Adrenal gland (tissue), 19 donors: ENCODE measurements at regions of chr7 and their contacts with region 1.

Region 1: DNA sequence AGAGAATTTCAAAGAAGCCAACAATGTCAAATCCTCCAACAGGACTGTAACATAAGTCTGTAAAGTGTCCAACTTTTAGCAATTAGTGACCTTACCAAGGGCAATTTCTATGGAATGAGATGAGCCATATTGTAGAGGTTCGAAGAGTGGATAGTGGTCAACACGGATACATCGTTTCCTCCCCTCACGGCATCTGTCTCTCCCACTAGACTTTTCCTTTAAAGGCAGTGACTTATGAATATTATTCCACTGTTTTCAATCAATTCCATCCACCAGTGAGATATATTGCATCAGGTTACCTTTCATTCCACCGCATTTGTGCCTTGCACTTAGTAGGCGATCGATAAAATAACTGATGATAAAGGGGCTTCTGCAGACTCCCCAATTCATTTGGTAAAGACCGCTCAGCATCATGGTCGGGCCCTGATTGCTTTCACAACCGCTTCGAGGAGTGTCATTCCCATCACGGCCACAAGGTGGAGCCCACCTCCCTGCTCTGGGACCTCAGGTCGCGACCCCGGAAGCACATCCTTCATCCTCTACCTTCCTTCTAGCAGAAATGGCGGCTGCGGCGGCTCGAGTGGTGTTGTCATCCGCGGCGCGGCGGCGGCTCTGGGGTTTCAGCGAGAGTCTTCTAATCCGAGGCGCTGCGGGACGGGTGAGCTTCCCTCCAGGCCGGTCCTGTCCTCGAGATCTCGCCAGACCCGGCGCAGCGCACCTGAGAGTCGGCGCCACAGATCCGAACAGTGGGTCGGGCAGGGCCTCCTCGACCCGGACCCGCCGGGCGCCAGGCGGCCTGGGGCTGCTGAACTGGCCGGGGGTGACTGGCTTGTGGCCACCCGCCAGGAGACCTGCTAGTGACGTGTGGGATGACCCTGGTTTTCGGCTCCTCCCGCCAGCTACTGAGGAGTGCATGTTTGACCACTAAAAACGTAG is at the start of gene PMPCB:
- DNase-seq: peak; percentile 94 to 99 (median 97)
- H3K4me3 ChIP-seq: peak within 1 kb of the TSS; percentile 49 to 88 (median 70)
- H3K27ac ChIP-seq: peak within 1 kb of the TSS; percentile 67 to 95 (median 90)
- H3K4me1 ChIP-seq: peaks cover 12 to 21% of the 10 kb centered on the region in 2 donors
- H3K27me3 ChIP-seq: no peaks in the 10 kb centered on the region
- CTCF ChIP-seq: peak; percentile 90 to 98 (median 96)
- POLR2A ChIP-seq: peak; percentile 27 to 73
- total RNA-seq, gene PMPCB: 58.8 to 120 (median 80.6) TPM

Region 2: DNA sequence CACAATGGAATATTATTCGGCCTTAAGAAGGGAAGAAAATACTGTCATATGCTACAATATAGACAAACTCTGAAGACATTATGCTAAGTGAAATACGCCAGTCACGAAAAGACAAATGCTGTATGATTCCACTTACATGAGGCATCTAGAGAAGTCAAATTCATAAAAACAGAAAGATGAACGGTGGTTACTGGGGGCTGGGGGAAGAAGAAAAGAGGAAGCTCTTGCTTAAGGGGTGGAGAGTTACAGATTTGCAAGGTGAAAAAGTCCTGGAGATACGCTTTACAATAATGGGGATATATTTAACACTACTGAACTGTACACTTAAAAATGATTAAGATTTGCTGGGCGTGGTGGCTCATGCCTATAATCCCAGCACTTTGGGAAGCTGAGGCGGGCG is 99.3 kb after region 1 on chr7:
- intact Hi-C with region 1: loop called in 1 of 2 experiments (anchors 10 kb)
- DNase-seq: no peak
- H3K4me3 ChIP-seq: no peak overlapping the region
- H3K27ac ChIP-seq: no peak overlapping the region
- H3K4me1 ChIP-seq: no peaks in the 10 kb centered on the region
- H3K27me3 ChIP-seq: no peaks in the 10 kb centered on the region
- CTCF ChIP-seq: no peak
- POLR2A ChIP-seq: no peak

Region 3: GRCh38 chr7:103752997-103753396 is 455.8 kb after region 1 on chr7:
- intact Hi-C with region 1: no loop called
- DNase-seq: no peak
- H3K4me3 ChIP-seq: no peak overlapping the region
- H3K27ac ChIP-seq: no peak overlapping the region
- H3K4me1 ChIP-seq: no peaks in the 10 kb centered on the region
- H3K27me3 ChIP-seq: no peaks in the 10 kb centered on the region
- CTCF ChIP-seq: no peak
- POLR2A ChIP-seq: no peak